ENCODE measurements at regions of chr2 and their contacts with region 1.

Region 1: GRCh38 chr2:98385050-98385699 is 38.9 kb downstream of the CNGA3 start:
- DNase-seq: peak; percentile 11
- ATAC-seq: peak; percentile 99
- H3K4me3 ChIP-seq: no peak overlapping the region
- H3K27ac ChIP-seq: no peak overlapping the region
- H3K4me1 ChIP-seq: no peaks in the 10 kb centered on the region
- H3K27me3 ChIP-seq: peaks cover 0 to 2% of the 10 kb centered on the region in 2 experiments; a peak in 3 of 4 replicates
- CTCF ChIP-seq: peak; percentile 98 to 100 (median 99); a peak in 5 of 6 replicates
- EP300 ChIP-seq: no peak
- POLR2A ChIP-seq: no peak
- RAD21 ChIP-seq: peak; percentile 99

Region 2: GRCh38 chr2:97710596-97711386 is 674.4 kb before region 1 on chr2:
- CTCF ChIA-PET with region 1: interaction called, 10 read pairs
- POLR2A ChIA-PET with region 1: no interaction called
- RAD21 ChIA-PET with region 1: interaction called, 3 read pairs
- SMC1A ChIA-PET with region 1: interaction called, 6 read pairs
- in situ Hi-C with region 1: no loop called
- intact Hi-C with region 1: loop called (anchors 1 kb)
- DNase-seq: no peak
- ATAC-seq: no peak
- H3K4me3 ChIP-seq: no peak overlapping the region
- H3K27ac ChIP-seq: no peak overlapping the region
- H3K4me1 ChIP-seq: 0 out of 2 replicates have a peak, but pooled peaks cover 3% of the 10 kb centered on the region
- H3K27me3 ChIP-seq: no peaks in the 10 kb centered on the region
- CTCF ChIP-seq: no peak
- EP300 ChIP-seq: no peak
- POLR2A ChIP-seq: no peak
- RAD21 ChIP-seq: no peak

Region 3: DNA sequence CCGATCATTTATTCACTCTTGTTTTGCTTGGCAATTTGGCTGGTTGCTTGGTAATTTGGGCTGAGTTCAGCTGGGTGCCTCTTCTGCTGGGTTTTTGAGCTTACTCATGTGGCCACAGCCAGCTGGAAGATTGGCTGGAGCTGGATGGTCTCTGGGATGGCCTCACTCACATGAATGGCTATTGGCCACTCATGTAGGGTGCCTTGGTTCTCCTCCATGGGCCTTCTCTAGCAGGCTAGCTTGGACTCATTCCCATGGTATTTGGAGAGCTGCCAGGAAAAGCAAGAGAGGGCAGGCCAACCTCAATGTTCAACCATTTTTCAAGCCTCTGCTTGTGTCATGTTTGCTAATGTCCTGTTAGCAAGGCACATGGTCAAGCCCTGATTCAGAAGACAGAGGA is 654.9 kb before region 1 on chr2:
- CTCF ChIA-PET with region 1: interaction called, 4 read pairs
- POLR2A ChIA-PET with region 1: no interaction called
- RAD21 ChIA-PET with region 1: interaction called, 3 read pairs
- SMC1A ChIA-PET with region 1: no interaction called
- in situ Hi-C with region 1: loop called (anchors 10 kb)
- intact Hi-C with region 1: no loop called
- DNase-seq: no peak
- ATAC-seq: no peak
- H3K4me3 ChIP-seq: no peak overlapping the region
- H3K27ac ChIP-seq: no peak overlapping the region
- H3K4me1 ChIP-seq: no peaks in the 10 kb centered on the region
- H3K27me3 ChIP-seq: no peaks in the 10 kb centered on the region
- CTCF ChIP-seq: no peak
- EP300 ChIP-seq: no peak
- POLR2A ChIP-seq: no peak
- RAD21 ChIP-seq: no peak

Region 4: GRCh38 chr2:97950329-97951154 is 434.6 kb before region 1 on chr2:
- CTCF ChIA-PET with region 1: no interaction called
- POLR2A ChIA-PET with region 1: no interaction called
- RAD21 ChIA-PET with region 1: no interaction called
- SMC1A ChIA-PET with region 1: no interaction called
- in situ Hi-C with region 1: no loop called
- intact Hi-C with region 1: loop called (anchors 10 kb)
- DNase-seq: no peak
- ATAC-seq: no peak
- H3K4me3 ChIP-seq: no peak overlapping the region
- H3K27ac ChIP-seq: no peak overlapping the region
- H3K4me1 ChIP-seq: peaks cover 38% of the 10 kb centered on the region
- H3K27me3 ChIP-seq: no peaks in the 10 kb centered on the region
- CTCF ChIP-seq: no peak
- EP300 ChIP-seq: no peak
- POLR2A ChIP-seq: no peak
- RAD21 ChIP-seq: no peak

Region 5: GRCh38 chr2:98359986-98360385 is 25.2 kb before region 1 on chr2:
- CTCF ChIA-PET with region 1: no interaction called
- POLR2A ChIA-PET with region 1: no interaction called
- RAD21 ChIA-PET with region 1: no interaction called
- SMC1A ChIA-PET with region 1: no interaction called
- in situ Hi-C with region 1: no loop called
- intact Hi-C with region 1: no loop called
- DNase-seq: no peak
- ATAC-seq: no peak
- H3K4me3 ChIP-seq: no peak overlapping the region
- H3K27ac ChIP-seq: no peak overlapping the region
- H3K4me1 ChIP-seq: no peaks in the 10 kb centered on the region
- H3K27me3 ChIP-seq: 0 out of 4 replicates have a peak, but pooled peaks cover 0 to 4% of the 10 kb centered on the region in 2 experiments
- CTCF ChIP-seq: no peak
- EP300 ChIP-seq: no peak
- POLR2A ChIP-seq: no peak
- RAD21 ChIP-seq: no peak

Region 6: DNA sequence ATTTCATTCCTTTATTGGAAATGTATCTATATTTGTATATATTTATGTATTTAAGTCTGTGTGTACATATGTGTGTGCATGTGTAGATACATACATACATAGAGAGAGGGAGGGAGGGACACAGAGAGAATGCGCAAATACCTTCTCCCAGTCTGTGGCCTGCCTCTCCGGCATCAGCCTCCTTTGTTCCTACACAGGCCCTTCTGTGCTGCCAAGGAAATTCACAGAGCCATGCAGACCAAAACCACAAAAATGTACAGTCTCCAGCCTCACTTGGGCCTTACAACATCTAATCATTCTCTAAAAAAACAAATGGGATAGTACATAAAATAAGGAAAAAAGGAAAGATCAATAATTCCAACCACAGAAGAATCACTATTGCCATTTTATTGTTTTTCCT is 559.6 kb after region 1 on chr2:
- CTCF ChIA-PET with region 1: no interaction called
- POLR2A ChIA-PET with region 1: no interaction called
- RAD21 ChIA-PET with region 1: no interaction called
- SMC1A ChIA-PET with region 1: no interaction called
- in situ Hi-C with region 1: no loop called
- intact Hi-C with region 1: no loop called
- DNase-seq: no peak
- ATAC-seq: no peak
- H3K4me3 ChIP-seq: no peak overlapping the region
- H3K27ac ChIP-seq: no peak overlapping the region
- H3K4me1 ChIP-seq: no peaks in the 10 kb centered on the region
- H3K27me3 ChIP-seq: no peaks in the 10 kb centered on the region
- CTCF ChIP-seq: no peak
- EP300 ChIP-seq: no peak
- POLR2A ChIP-seq: no peak
- RAD21 ChIP-seq: no peak

Measured in GM12878 (cell line).